Head of caudate nucleus (tissue), 42 donors: ENCODE measurements at regions of chr19 and their contacts with region 1.

Region 1: GRCh38 chr19:5138606-5139582 is 170.0 kb downstream of the KDM4B start:
- DNase-seq: peak in 24 of 42 donors; percentile 0 to 62 (median 36)

Region 2: DNA sequence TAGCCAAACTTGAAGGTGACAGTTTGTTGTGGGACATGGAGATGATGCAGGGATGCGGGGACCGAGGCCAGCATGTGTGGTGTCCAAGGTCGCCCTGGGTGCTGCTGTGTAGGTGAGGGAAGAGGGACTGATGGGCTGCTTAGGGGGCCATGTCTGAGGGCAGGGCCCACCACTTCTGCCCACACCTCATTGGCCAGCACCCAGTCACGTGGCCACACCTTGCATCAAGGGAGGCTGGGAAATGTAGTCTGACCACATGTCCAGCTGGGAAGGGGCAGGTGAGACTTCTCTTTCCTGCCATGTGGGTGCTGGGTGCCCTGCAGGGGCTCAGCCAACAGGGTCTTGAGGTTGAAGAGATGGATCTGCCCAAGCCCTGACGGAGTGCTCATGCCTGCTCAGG is 81.0 kb before region 1 on chr19:
- intact Hi-C with region 1: loop called (anchors 5 kb)
- DNase-seq: peak in 1 of 42 donors; percentile 42